ENCODE measurements at regions of chr10 and their contacts with region 1.

Region 1: DNA sequence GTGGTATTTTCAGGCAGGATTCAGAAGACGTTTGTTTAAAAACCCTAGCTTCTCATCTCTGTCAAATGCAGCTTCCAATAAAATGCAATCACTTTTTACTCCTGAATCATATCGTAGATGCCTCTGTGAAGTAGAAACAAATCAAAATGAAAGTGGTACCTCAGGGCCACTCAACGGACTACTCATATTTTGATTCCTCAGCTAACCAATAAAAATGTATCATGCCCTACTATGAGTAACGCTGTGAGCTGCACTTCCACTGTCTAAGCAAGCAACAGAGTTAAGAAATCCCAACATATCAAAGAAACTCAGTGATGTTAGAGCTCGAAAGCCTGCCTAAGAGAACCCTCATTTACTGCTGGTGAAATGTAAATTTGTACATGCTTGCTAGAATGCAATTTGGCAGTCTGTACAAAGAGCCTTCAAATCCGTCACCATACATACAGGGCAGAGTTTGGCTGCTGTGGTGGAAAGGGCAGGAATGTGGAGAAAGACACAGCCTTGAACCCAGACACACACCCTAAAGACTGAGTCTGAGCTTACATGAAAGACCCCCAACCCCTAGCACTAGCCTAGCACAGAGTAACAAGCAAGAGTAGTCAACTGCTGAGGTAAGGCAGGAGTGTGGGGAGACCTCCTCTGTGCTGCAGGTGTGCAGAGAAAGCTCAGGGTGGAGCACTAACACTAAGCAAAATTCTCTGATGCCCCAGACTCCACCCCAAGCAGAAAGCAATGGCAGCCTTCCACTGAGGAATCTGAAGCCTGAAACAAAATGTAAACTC is 151.5 kb downstream of the ANK3 start:
- DNase-seq: peak; percentile 89
- ATAC-seq: peak; percentile 99
- H3K4me3 ChIP-seq: peak overlapping the region; percentile 66
- H3K27ac ChIP-seq: 0 out of 2 replicates have a peak overlapping the region, but pooled peaks have one; percentile 3
- H3K4me1 ChIP-seq: peaks cover 25% of the 10 kb centered on the region
- H3K27me3 ChIP-seq: no peaks in the 10 kb centered on the region
- CTCF ChIP-seq: peak; percentile 96

Region 2: GRCh38 chr10:60314069-60314940 is 76.1 kb after region 1 on chr10:
- CTCF ChIA-PET with region 1: interaction called, 5 read pairs
- POLR2A ChIA-PET with region 1: no interaction called
- intact Hi-C with region 1: loop called (anchors 1 kb)
- DNase-seq: peak; percentile 82
- ATAC-seq: peak; percentile 77
- H3K4me3 ChIP-seq: peak overlapping the region; percentile 11; the same call in 1 of the 2 replicates
- H3K27ac ChIP-seq: peak overlapping the region; percentile 76
- H3K4me1 ChIP-seq: peaks cover 36% of the 10 kb centered on the region
- H3K27me3 ChIP-seq: no peaks in the 10 kb centered on the region
- CTCF ChIP-seq: no peak

Region 3: GRCh38 chr10:60335708-60336107 is 97.5 kb after region 1 on chr10:
- CTCF ChIA-PET with region 1: interaction called, 8 read pairs
- POLR2A ChIA-PET with region 1: no interaction called
- intact Hi-C with region 1: loop called (anchors 1 kb)
- DNase-seq: peak; percentile 72
- ATAC-seq: peak; percentile 85
- H3K4me3 ChIP-seq: no peak overlapping the region
- H3K27ac ChIP-seq: no peak overlapping the region
- H3K4me1 ChIP-seq: peaks cover 9% of the 10 kb centered on the region; the same call in 1 of the 2 replicates
- H3K27me3 ChIP-seq: no peaks in the 10 kb centered on the region
- CTCF ChIP-seq: peak; percentile 95

Region 4: GRCh38 chr10:60377955-60378354 is 139.8 kb after region 1 on chr10:
- CTCF ChIA-PET with region 1: no interaction called
- POLR2A ChIA-PET with region 1: no interaction called
- intact Hi-C with region 1: no loop called
- DNase-seq: peak; percentile 57
- ATAC-seq: no peak
- H3K4me3 ChIP-seq: no peak overlapping the region
- H3K27ac ChIP-seq: no peak overlapping the region
- H3K4me1 ChIP-seq: peaks cover 35% of the 10 kb centered on the region
- H3K27me3 ChIP-seq: no peaks in the 10 kb centered on the region
- CTCF ChIP-seq: no peak

Measured in PC-3 (cell line).